A673 (cell line): ENCODE measurements at regions of chr1 and their contacts with region 1.

Region 1: GRCh38 chr1:204080163-204080903 is 7.4 kb downstream of the SOX13 start:
- DNase-seq: peak; percentile 97
- H3K4me3 ChIP-seq: no peak overlapping the region
- H3K27ac ChIP-seq: peak overlapping the region; percentile 66
- H3K4me1 ChIP-seq: peaks cover 35% of the 10 kb centered on the region
- H3K27me3 ChIP-seq: no peaks in the 10 kb centered on the region
- CTCF ChIP-seq: peak; percentile 25; the same call in 1 of the 2 replicates

Region 2: GRCh38 chr1:204177133-204177532 is 96.8 kb after region 1 on chr1:
- CTCF ChIA-PET with region 1: no interaction called
- POLR2A ChIA-PET with region 1: no interaction called
- intact Hi-C with region 1: no loop called
- DNase-seq: no peak
- H3K4me3 ChIP-seq: no peak overlapping the region
- H3K27ac ChIP-seq: no peak overlapping the region
- H3K4me1 ChIP-seq: no peaks in the 10 kb centered on the region
- H3K27me3 ChIP-seq: peaks cover 14% of the 10 kb centered on the region
- CTCF ChIP-seq: no peak

Region 3: GRCh38 chr1:204791453-204792353 is 711.4 kb after region 1 on chr1:
- CTCF ChIA-PET with region 1: interaction called, 13 read pairs
- POLR2A ChIA-PET with region 1: no interaction called
- intact Hi-C with region 1: no loop called
- DNase-seq: peak; percentile 80
- H3K4me3 ChIP-seq: no peak overlapping the region
- H3K27ac ChIP-seq: no peak overlapping the region
- H3K4me1 ChIP-seq: no peaks in the 10 kb centered on the region
- H3K27me3 ChIP-seq: peaks cover 6% of the 10 kb centered on the region
- CTCF ChIP-seq: peak; percentile 87